CD8-positive, alpha-beta T cell (primary cell): ENCODE measurements at regions of chr10 and their contacts with region 1.

Region 1: GRCh38 chr10:86545101-86545500 is 23.5 kb upstream of the WAPL start:
- DNase-seq: no peak
- ATAC-seq: no peak
- H3K4me3 ChIP-seq: no peak overlapping the region
- H3K4me3 Mint-ChIP-seq: no peak overlapping the region
- H3K27ac ChIP-seq: no peak overlapping the region
- H3K27ac Mint-ChIP-seq: no peak overlapping the region
- H3K4me1 ChIP-seq: peaks cover 3% of the 10 kb centered on the region
- H3K4me1 Mint-ChIP-seq: peaks cover under 1% of the 10 kb centered on the region
- H3K27me3 ChIP-seq: no peaks in the 10 kb centered on the region
- H3K27me3 Mint-ChIP-seq: no peaks in the 10 kb centered on the region
- CTCF ChIP-seq: no peak

Region 2: GRCh38 chr10:86334488-86335085 is 210.5 kb before region 1 on chr10:
- CTCF ChIA-PET with region 1: no interaction called
- POLR2A ChIA-PET with region 1: no interaction called
- intact Hi-C with region 1: no loop called
- DNase-seq: no peak
- ATAC-seq: no peak
- H3K4me3 ChIP-seq: no peak overlapping the region
- H3K4me3 Mint-ChIP-seq: no peak overlapping the region
- H3K27ac ChIP-seq: no peak overlapping the region
- H3K27ac Mint-ChIP-seq: no peak overlapping the region
- H3K4me1 ChIP-seq: no peaks in the 10 kb centered on the region
- H3K4me1 Mint-ChIP-seq: no peaks in the 10 kb centered on the region
- H3K27me3 ChIP-seq: no peaks in the 10 kb centered on the region
- H3K27me3 Mint-ChIP-seq: peaks cover 12% of the 10 kb centered on the region
- CTCF ChIP-seq: no peak

Region 3: GRCh38 chr10:86393862-86394455 is 151.1 kb before region 1 on chr10:
- CTCF ChIA-PET with region 1: no interaction called
- POLR2A ChIA-PET with region 1: no interaction called
- intact Hi-C with region 1: no loop called
- DNase-seq: peak in 1 of 9 experiments; percentile 23
- ATAC-seq: no peak
- H3K4me3 ChIP-seq: no peak overlapping the region
- H3K4me3 Mint-ChIP-seq: no peak overlapping the region
- H3K27ac ChIP-seq: no peak overlapping the region
- H3K27ac Mint-ChIP-seq: no peak overlapping the region
- H3K4me1 ChIP-seq: no peaks in the 10 kb centered on the region
- H3K4me1 Mint-ChIP-seq: peaks cover 5% of the 10 kb centered on the region
- H3K27me3 ChIP-seq: peaks cover 0 to 2% of the 10 kb centered on the region in 2 experiments
- H3K27me3 Mint-ChIP-seq: peaks cover 6% of the 10 kb centered on the region
- CTCF ChIP-seq: no peak

Region 4: DNA sequence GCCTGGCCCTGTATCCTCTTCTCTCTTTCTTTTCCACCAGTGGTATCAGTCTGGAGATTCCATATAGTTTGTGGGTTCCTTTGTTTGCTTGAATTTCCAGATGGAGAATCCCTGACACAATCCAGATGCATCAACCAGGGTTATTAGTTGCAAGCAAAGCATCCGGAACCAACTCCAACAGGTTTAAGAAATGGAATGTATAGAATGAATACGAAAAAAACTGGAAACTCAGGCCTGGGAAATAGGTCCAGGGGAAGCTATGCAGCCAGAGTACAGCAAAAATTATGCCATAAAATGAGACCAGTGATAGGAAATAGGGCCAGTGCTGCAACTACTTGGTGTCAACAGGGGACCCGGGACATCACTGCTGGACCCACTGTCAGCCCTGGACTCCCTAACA is 28.8 kb after region 1 on chr10:
- CTCF ChIA-PET with region 1: no interaction called
- POLR2A ChIA-PET with region 1: no interaction called
- intact Hi-C with region 1: loop called in 1 of 2 experiments (anchors 1 kb)
- DNase-seq: no peak
- ATAC-seq: no peak
- H3K4me3 ChIP-seq: no peak overlapping the region
- H3K4me3 Mint-ChIP-seq: no peak overlapping the region
- H3K27ac ChIP-seq: no peak overlapping the region
- H3K27ac Mint-ChIP-seq: no peak overlapping the region
- H3K4me1 ChIP-seq: no peaks in the 10 kb centered on the region
- H3K4me1 Mint-ChIP-seq: no peaks in the 10 kb centered on the region
- H3K27me3 ChIP-seq: no peaks in the 10 kb centered on the region
- H3K27me3 Mint-ChIP-seq: no peaks in the 10 kb centered on the region
- CTCF ChIP-seq: no peak

Region 5: GRCh38 chr10:86630079-86630478 is 85.0 kb after region 1 on chr10:
- CTCF ChIA-PET with region 1: no interaction called
- POLR2A ChIA-PET with region 1: no interaction called
- intact Hi-C with region 1: no loop called
- DNase-seq: no peak
- ATAC-seq: no peak
- H3K4me3 ChIP-seq: no peak overlapping the region
- H3K4me3 Mint-ChIP-seq: no peak overlapping the region
- H3K27ac ChIP-seq: no peak overlapping the region
- H3K27ac Mint-ChIP-seq: no peak overlapping the region
- H3K4me1 ChIP-seq: no peaks in the 10 kb centered on the region
- H3K4me1 Mint-ChIP-seq: peaks cover 2% of the 10 kb centered on the region
- H3K27me3 ChIP-seq: peaks cover 0 to 14% of the 10 kb centered on the region in 2 experiments
- H3K27me3 Mint-ChIP-seq: peaks cover 35% of the 10 kb centered on the region
- CTCF ChIP-seq: no peak